K562 (cell line): ENCODE measurements at regions of chr1 and their contacts with region 1.

Region 1: GRCh38 chr1:231252341-231252740 is 11.3 kb downstream of the GNPAT start:
- DNase-seq: no peak
- ATAC-seq: no peak
- H3K4me3 ChIP-seq: no peak overlapping the region
- H3K27ac ChIP-seq: no peak overlapping the region
- H3K4me1 ChIP-seq: no peaks in the 10 kb centered on the region
- H3K27me3 ChIP-seq: no peaks in the 10 kb centered on the region
- CTCF ChIP-seq: no peak
- EP300 ChIP-seq: no peak
- POLR2A ChIP-seq: no peak
- RAD21 ChIP-seq: no peak

Region 2: DNA sequence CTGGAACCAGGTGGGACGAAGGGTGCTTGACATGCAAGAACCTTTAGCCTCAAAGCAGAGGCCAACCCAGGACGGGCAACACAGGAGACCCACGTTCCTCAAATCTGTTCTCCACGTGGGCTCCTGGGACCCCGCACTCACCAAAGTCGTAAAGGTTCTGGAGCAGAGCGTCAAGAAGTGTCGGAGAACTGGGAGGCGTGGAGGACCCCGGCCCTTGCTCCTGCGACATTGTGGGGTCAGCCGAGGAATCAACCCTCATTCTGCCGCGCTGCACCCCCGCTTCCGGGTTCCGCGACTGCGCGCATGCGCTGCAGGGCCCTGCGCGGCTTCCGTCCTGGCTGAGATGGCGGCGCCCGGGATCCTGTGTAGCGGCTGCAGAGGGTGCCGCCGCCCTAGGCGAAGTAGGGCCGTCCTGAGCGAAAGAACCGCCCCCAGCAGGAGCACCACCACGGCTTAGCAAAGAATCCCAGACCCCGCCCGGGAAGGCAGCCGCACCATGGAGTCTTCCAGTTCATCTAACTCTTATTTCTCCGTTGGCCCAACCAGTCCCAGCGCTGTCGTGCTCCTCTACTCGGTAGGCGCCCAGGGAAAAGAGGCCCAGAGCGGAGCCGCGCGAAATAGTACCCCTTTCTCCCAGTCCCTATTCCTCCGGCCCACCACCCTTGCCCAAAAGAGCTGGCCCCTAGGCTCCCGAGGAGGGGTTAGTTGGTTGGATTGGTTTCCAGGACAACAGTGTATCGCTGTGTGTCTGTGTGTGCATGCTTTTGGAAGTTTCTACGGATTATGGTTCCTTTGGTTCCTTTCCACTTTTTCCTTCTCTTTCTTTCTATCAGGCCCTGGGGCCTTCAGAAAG is 11.2 kb before region 1 on chr1 and contains the start of gene GNPAT:
- CTCF ChIA-PET with region 1: no interaction called
- POLR2A ChIA-PET with region 1: interaction called, 10 read pairs
- in situ Hi-C with region 1: no loop called
- intact Hi-C with region 1: no loop called
- DNase-seq: peak; percentile 95 to 99 (median 98)
- ATAC-seq: peak; percentile 98
- H3K4me3 ChIP-seq: peak within 1 kb of the TSS; percentile 62
- H3K27ac ChIP-seq: peak within 1 kb of the TSS; percentile 81
- H3K4me1 ChIP-seq: peaks cover 5 to 18% of the 10 kb centered on the region in 2 experiments; a peak in 3 of 5 replicates
- H3K27me3 ChIP-seq: no peaks in the 10 kb centered on the region
- CTCF ChIP-seq: peak in 1 of 3 experiments; percentile 20; a peak in 1 of 6 replicates
- EP300 ChIP-seq: no peak
- POLR2A ChIP-seq: peak; percentile 97
- RAD21 ChIP-seq: no peak
- polyA plus RNA-seq, gene GNPAT: 32.1 to 49.8 TPM